Psoas muscle (tissue), 8 donors: ENCODE measurements at regions of chr2 and their contacts with region 1.

Region 1: GRCh38 chr2:189580658-189581353 is at the start of gene SLC40A1:
- DNase-seq: peak; percentile 86 to 92
- ATAC-seq: peak; percentile 95 to 98 (median 96)
- H3K4me3 ChIP-seq: peak within 1 kb of the TSS; percentile 82
- H3K27ac ChIP-seq: peak within 1 kb of the TSS; percentile 96
- H3K4me1 ChIP-seq: peaks cover 38% of the 10 kb centered on the region
- H3K27me3 ChIP-seq: no peaks in the 10 kb centered on the region
- CTCF ChIP-seq: no peak
- total RNA-seq, gene SLC40A1: 21.5 to 65.7 (median 34.6) TPM

Region 2: GRCh38 chr2:188695953-188696352 is 884.9 kb before region 1 on chr2:
- intact Hi-C with region 1: no loop called
- DNase-seq: no peak
- ATAC-seq: no peak
- H3K4me3 ChIP-seq: no peak overlapping the region
- H3K27ac ChIP-seq: no peak overlapping the region
- H3K4me1 ChIP-seq: no peaks in the 10 kb centered on the region
- H3K27me3 ChIP-seq: no peaks in the 10 kb centered on the region
- CTCF ChIP-seq: no peak

Region 3: DNA sequence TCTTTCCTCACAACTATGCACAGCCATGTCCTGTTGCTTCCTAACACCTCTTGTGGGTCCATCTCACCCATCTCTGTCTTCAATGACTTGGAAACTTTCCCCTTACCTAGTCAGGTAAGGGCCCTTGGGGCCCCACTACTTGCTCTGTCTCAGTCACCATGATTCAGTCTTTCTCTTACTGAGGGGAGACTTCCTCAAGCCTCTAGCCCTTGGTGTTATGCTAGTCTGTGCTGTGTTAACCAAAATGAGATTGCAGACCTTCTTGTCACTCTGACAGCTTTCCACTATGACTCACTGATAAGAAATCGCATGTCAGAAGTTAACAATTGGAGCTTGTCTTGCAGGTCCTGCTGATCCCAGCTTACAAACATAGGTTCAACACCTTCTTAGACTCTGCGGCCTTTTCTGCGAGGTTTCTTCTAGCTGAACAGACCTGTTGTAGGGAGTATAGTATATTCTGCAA is 74.3 kb before region 1 on chr2:
- intact Hi-C with region 1: loop called in 1 of 2 experiments (anchors 5 kb)
- DNase-seq: no peak
- ATAC-seq: no peak
- H3K4me3 ChIP-seq: no peak overlapping the region
- H3K27ac ChIP-seq: no peak overlapping the region
- H3K4me1 ChIP-seq: peaks cover 4% of the 10 kb centered on the region
- H3K27me3 ChIP-seq: no peaks in the 10 kb centered on the region
- CTCF ChIP-seq: no peak

Region 4: GRCh38 chr2:189613077-189613636 is 32.4 kb after region 1 on chr2:
- intact Hi-C with region 1: loop called in 1 of 2 experiments (anchors 2 kb)
- DNase-seq: no peak
- ATAC-seq: peak; percentile 94 to 98 (median 96)
- H3K4me3 ChIP-seq: peak overlapping the region; percentile 62
- H3K27ac ChIP-seq: peak overlapping the region; percentile 89
- H3K4me1 ChIP-seq: peaks cover 18% of the 10 kb centered on the region
- H3K27me3 ChIP-seq: no peaks in the 10 kb centered on the region
- CTCF ChIP-seq: no peak

Region 5: GRCh38 chr2:189674374-189675112 is 93.7 kb after region 1 on chr2 and contains the start of gene ANKAR:
- intact Hi-C with region 1: no loop called
- DNase-seq: peak; percentile 92 to 96
- ATAC-seq: peak; percentile 98 to 99 (median 98)
- H3K4me3 ChIP-seq: peak within 1 kb of the TSS; percentile 84
- H3K27ac ChIP-seq: peak within 1 kb of the TSS; percentile 91
- H3K4me1 ChIP-seq: peaks cover 10% of the 10 kb centered on the region
- H3K27me3 ChIP-seq: no peaks in the 10 kb centered on the region
- CTCF ChIP-seq: peak; percentile 86
- total RNA-seq, gene ANKAR: 4.1 to 8.7 (median 6.0) TPM